T-cell (primary cell): ENCODE measurements at regions of chr12 and their contacts with region 1.

Region 1: GRCh38 chr12:103348935-103349334 is 146.8 kb downstream of the C12orf42 start:
- DNase-seq: no peak
- ATAC-seq: peak in 1 of 4 experiments; percentile 40
- H3K4me3 ChIP-seq: no peak overlapping the region
- H3K4me3 Mint-ChIP-seq: no peak overlapping the region
- H3K27ac ChIP-seq: no peak overlapping the region
- H3K27ac Mint-ChIP-seq: no peak overlapping the region
- H3K4me1 ChIP-seq: no peaks in the 10 kb centered on the region
- H3K4me1 Mint-ChIP-seq: peaks cover 9 to 18% (median 10%) of the 10 kb centered on the region in 3 donors
- H3K27me3 ChIP-seq: no peaks in the 10 kb centered on the region
- H3K27me3 Mint-ChIP-seq: no peaks in the 10 kb centered on the region

Region 2: GRCh38 chr12:103369929-103370328 is 21.0 kb after region 1 on chr12:
- CTCF ChIA-PET with region 1: no interaction called
- POLR2A ChIA-PET with region 1: interaction called in 1 of 2 experiments, 13 read pairs
- DNase-seq: no peak
- ATAC-seq: no peak
- H3K4me3 ChIP-seq: no peak overlapping the region
- H3K4me3 Mint-ChIP-seq: no peak overlapping the region
- H3K27ac ChIP-seq: no peak overlapping the region
- H3K27ac Mint-ChIP-seq: no peak overlapping the region
- H3K4me1 ChIP-seq: no peaks in the 10 kb centered on the region
- H3K4me1 Mint-ChIP-seq: peaks cover 23 to 35% (median 28%) of the 10 kb centered on the region in 3 donors
- H3K27me3 ChIP-seq: no peaks in the 10 kb centered on the region
- H3K27me3 Mint-ChIP-seq: no peaks in the 10 kb centered on the region